Aorta (tissue), 5 donors: ENCODE measurements at regions of chr4 and their contacts with region 1.

Region 1: GRCh38 chr4:142126890-142127497 is 490.6 kb downstream of the IL15 start:
- DNase-seq: no peak
- ATAC-seq: peak; percentile 62
- H3K4me3 ChIP-seq: no peak overlapping the region
- H3K27ac ChIP-seq: no peak overlapping the region
- H3K4me1 ChIP-seq: peaks cover 0 to 3% of the 10 kb centered on the region in 2 donors
- H3K27me3 ChIP-seq: no peaks in the 10 kb centered on the region

Region 2: GRCh38 chr4:142353149-142353738 is 226.2 kb after region 1 on chr4:
- intact Hi-C with region 1: loop called (anchors 5 to 10 kb)
- DNase-seq: no peak
- ATAC-seq: peak; percentile 83
- H3K4me3 ChIP-seq: no peak overlapping the region
- H3K27ac ChIP-seq: no peak overlapping the region
- H3K4me1 ChIP-seq: peaks cover 6 to 10% of the 10 kb centered on the region in 2 donors
- H3K27me3 ChIP-seq: no peaks in the 10 kb centered on the region

Region 3: DNA sequence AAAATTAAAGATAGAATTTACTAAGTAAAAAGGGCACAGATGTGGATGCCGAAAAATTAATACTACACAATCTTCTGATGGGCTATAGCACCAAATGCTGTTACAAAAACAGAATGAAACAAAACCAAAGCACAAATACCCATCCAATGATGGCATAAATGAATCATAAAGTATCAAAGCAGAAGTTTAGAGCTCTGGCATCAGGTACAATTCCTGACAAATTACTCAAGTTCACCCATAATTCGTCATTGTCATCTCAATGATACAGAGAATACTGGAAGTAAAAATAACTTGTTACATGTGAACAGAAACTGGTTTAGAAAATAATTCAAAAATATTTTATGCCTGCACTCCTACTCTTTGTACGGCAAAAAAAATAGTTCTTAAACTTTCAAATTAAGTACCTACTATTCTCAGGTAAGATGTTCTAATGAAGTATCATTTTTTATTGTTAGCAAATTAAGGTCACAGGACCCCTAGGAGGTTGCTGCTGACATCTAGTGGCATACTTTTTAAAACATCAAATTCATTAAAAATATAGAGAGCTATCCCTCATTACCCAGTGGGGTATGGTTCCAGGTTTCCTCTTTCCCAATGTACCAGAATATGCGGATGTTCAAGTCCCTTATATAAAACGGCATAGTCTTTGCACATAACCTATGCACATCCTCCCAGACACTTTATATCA is 593.0 kb after region 1 on chr4:
- intact Hi-C with region 1: loop called in 1 of 2 experiments (anchors 5 kb)
- DNase-seq: no peak
- ATAC-seq: no peak
- H3K4me3 ChIP-seq: no peak overlapping the region
- H3K27ac ChIP-seq: no peak overlapping the region
- H3K4me1 ChIP-seq: no peaks in the 10 kb centered on the region
- H3K27me3 ChIP-seq: no peaks in the 10 kb centered on the region

Region 4: GRCh38 chr4:142846729-142847596 is 720.0 kb after region 1 on chr4:
- intact Hi-C with region 1: loop called (anchors 2 to 5 kb)
- DNase-seq: peak; percentile 52 to 73
- ATAC-seq: peak; percentile 47
- H3K4me3 ChIP-seq: peak overlapping the region; percentile 9 to 84
- H3K27ac ChIP-seq: peak overlapping the region in 1 of 2 donors; percentile 22
- H3K4me1 ChIP-seq: no peaks in the 10 kb centered on the region
- H3K27me3 ChIP-seq: no peaks in the 10 kb centered on the region

Region 5: DNA sequence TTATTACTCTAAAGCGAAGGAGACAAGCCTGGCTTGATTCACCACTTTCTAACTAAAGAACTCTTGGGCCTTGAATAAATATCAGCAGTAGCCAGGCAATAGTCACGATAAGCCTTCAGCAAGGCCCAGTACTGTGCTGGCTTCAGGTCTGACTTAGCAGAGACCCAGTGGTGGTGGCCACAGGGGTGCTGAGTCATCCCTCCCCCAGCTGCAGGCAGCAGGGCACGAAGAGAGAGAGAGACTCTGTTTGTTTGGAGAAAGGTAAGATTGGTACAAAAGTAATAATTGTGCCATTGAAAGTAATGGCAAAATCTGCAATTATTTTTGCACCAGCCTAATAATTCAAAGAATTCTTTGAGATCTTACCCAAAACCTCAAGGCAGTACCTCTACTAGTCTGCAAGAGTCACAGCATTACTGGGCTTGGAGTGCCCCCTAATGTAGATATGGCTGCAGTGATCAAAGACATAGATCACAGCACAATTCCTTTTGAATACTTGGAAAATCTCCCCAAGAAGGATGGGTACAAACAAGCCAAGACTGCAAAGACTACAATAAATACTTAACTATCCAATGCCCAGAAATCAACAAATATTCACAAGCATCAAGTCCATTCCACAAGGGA is 898.2 kb after region 1 on chr4:
- intact Hi-C with region 1: loop called in 1 of 2 experiments (anchors 10 kb)
- DNase-seq: no peak
- ATAC-seq: no peak
- H3K4me3 ChIP-seq: no peak overlapping the region
- H3K27ac ChIP-seq: no peak overlapping the region
- H3K4me1 ChIP-seq: peaks cover 0 to 1% of the 10 kb centered on the region in 2 donors
- H3K27me3 ChIP-seq: no peaks in the 10 kb centered on the region

Region 6: GRCh38 chr4:143085224-143085623 is 958.2 kb after region 1 on chr4:
- intact Hi-C with region 1: loop called in 1 of 2 experiments (anchors 10 kb)
- DNase-seq: no peak
- ATAC-seq: no peak
- H3K4me3 ChIP-seq: no peak overlapping the region
- H3K27ac ChIP-seq: no peak overlapping the region
- H3K4me1 ChIP-seq: no peaks in the 10 kb centered on the region
- H3K27me3 ChIP-seq: no peaks in the 10 kb centered on the region

Region 7: GRCh38 chr4:143178923-143179322 is 1051.9 kb after region 1 on chr4:
- intact Hi-C with region 1: loop called in 1 of 2 experiments (anchors 10 kb)
- DNase-seq: no peak
- ATAC-seq: no peak
- H3K4me3 ChIP-seq: no peak overlapping the region
- H3K27ac ChIP-seq: no peak overlapping the region
- H3K4me1 ChIP-seq: peaks cover 0 to 2% of the 10 kb centered on the region in 2 donors
- H3K27me3 ChIP-seq: no peaks in the 10 kb centered on the region